ENCODE measurements at regions of chr12 and their contacts with region 1.

Region 1: GRCh38 chr12:68040450-68041075 is 51.3 kb downstream of the IFNG-AS1 start:
- DNase-seq: peak; percentile 83
- H3K4me3 Mint-ChIP-seq: no peak overlapping the region
- H3K27ac Mint-ChIP-seq: peak overlapping the region; percentile 29
- H3K4me1 Mint-ChIP-seq: peaks cover 42% of the 10 kb centered on the region
- H3K27me3 Mint-ChIP-seq: no peaks in the 10 kb centered on the region

Region 2: GRCh38 chr12:67355578-67356379 is 684.8 kb before region 1 on chr12:
- CTCF ChIA-PET with region 1: interaction called, 5 read pairs
- intact Hi-C with region 1: loop called (anchors 5 kb)
- DNase-seq: peak; percentile 17
- H3K4me3 Mint-ChIP-seq: no peak overlapping the region
- H3K27ac Mint-ChIP-seq: no peak overlapping the region
- H3K4me1 Mint-ChIP-seq: peaks cover 25% of the 10 kb centered on the region
- H3K27me3 Mint-ChIP-seq: no peaks in the 10 kb centered on the region

Region 3: DNA sequence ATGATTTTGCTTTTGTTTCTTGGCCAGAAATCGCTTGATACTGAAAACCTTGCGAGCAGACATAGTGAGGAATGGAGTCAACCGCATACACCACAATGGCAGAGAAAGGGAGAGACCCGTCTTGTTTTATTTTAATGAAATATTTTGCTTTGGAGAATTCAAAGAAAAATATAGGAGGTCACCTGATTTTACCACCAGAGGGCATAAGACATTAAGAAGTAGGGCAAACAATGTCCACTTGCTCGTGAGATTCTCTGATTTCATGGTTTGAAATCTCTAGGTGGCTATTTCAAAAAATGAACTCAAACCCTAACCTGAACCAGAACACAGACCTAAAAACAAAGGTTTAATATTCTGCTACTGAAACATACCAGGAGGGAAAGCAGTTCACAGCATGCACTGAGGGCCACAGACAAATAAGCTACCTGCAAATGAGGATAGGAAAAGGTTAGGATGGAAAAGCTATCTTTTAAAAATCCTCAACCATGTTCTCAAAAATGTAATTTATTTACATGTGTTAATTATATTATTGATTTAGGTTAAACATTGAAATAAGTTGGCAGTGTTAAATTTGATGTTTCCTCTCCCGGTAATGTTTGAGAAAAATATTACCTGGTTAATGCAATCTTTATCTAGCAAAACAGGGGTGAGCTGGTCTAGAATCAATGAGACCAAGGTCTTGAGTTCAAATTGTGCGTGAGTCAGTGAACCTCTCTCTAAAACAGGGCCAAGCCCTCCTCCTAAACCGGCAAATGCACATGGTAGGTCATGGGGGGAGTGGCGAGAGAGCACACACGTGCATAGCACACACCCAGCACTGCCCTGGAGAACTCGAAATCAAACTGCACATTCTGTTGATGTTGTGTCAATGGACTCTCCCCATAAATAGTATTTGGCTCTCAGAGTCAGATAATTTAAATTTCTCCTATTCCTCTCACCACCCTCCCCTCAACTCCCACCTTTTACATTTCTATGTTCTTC is 38.8 kb before region 1 on chr12:
- CTCF ChIA-PET with region 1: interaction called, 3 read pairs
- intact Hi-C with region 1: loop called (anchors 1 kb)
- DNase-seq: no peak
- H3K4me3 Mint-ChIP-seq: no peak overlapping the region
- H3K27ac Mint-ChIP-seq: no peak overlapping the region
- H3K4me1 Mint-ChIP-seq: peaks cover 13% of the 10 kb centered on the region
- H3K27me3 Mint-ChIP-seq: no peaks in the 10 kb centered on the region

Region 4: GRCh38 chr12:68158432-68158831 is 117.9 kb after region 1 on chr12:
- CTCF ChIA-PET with region 1: interaction called, 74 read pairs
- intact Hi-C with region 1: loop called (anchors 1 kb)
- DNase-seq: no peak
- H3K4me3 Mint-ChIP-seq: peak overlapping the region; percentile 3
- H3K27ac Mint-ChIP-seq: peak overlapping the region; percentile 25
- H3K4me1 Mint-ChIP-seq: peaks cover 28% of the 10 kb centered on the region
- H3K27me3 Mint-ChIP-seq: no peaks in the 10 kb centered on the region

Region 5: DNA sequence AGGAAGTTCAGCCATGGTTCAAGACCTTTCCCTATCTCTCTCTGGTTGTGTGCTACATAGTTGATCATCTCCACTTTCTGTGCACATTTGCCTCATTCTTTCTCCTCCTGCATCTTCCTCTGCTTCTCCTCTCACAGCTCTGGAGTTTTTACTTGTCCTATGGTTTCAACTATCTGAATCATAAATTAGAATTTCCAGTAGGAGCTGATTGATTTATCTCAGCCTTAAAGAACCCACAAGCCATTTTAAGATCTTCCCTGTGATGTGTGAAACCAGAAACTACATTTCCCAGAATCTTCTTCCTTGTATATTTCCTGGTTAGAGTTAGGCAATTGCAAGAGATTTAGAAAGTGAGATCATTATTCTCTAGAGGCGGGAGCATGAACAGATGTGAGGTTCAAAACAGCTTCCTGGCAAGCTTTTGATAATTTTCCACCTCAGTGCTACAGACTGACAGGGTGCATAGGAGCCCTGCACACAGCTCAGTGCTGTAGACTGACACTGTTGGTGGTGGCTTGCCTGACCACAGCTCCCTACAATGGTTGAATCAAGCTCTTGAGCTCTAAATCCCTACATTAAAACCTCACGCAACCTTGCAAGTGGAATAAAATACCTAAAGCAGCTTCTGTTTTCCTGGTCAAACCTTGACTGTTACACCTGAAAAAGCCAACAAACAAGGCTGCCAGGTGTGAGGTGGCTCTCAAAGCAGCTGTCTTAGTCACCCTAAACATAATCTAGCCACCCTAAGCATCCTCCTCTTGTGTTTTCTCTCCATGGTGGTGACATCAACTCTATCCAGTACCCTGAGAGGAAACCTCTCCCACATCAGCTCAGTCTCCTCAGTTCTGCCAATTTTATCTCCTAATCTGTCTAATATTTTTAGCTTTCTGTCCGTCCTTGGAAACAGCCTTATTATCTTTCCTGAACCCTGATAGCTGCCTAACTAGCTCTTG is 140.5 kb after region 1 on chr12:
- CTCF ChIA-PET with region 1: interaction called, 17 read pairs
- intact Hi-C with region 1: loop called (anchors 5 kb)
- DNase-seq: peak; percentile 70
- H3K4me3 Mint-ChIP-seq: no peak overlapping the region
- H3K27ac Mint-ChIP-seq: peak overlapping the region; percentile 93
- H3K4me1 Mint-ChIP-seq: peaks cover 56% of the 10 kb centered on the region
- H3K27me3 Mint-ChIP-seq: no peaks in the 10 kb centered on the region

Region 6: DNA sequence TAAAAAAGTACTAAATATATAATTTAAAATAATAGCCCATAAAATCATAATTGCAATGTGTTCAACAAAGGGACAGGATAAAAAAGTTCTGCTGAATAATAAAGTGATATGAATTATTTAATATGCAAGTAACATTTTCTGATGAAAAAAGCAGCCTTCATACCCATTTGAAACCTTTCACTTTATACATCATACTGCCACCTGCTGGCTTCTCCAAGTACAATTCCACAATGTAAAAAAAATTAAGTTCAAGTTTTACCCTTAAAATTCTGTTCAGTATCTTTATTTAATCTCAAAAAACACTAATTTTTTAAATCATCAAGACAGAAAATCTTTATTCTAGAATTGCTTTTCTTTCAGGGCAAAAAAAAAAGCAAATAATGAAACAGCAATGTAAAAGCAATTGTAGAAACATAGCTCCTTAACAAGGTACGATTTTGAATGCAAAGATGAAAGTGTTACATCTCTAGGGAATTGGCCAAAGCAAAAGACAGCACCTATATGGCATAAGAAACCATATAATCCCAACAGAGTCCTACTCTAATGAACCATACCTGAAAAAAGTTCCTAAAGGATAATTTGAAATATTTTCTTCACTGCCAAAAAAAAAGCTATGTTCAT is 276.6 kb after region 1 on chr12:
- CTCF ChIA-PET with region 1: interaction called, 15 read pairs
- intact Hi-C with region 1: loop called (anchors 1 kb)
- DNase-seq: peak; percentile 69
- H3K4me3 Mint-ChIP-seq: no peak overlapping the region
- H3K27ac Mint-ChIP-seq: no peak overlapping the region
- H3K4me1 Mint-ChIP-seq: no peaks in the 10 kb centered on the region
- H3K27me3 Mint-ChIP-seq: no peaks in the 10 kb centered on the region